Heart left ventricle (tissue), 16 donors: ENCODE measurements at regions of chr3 and their contacts with region 1.

Region 1: DNA sequence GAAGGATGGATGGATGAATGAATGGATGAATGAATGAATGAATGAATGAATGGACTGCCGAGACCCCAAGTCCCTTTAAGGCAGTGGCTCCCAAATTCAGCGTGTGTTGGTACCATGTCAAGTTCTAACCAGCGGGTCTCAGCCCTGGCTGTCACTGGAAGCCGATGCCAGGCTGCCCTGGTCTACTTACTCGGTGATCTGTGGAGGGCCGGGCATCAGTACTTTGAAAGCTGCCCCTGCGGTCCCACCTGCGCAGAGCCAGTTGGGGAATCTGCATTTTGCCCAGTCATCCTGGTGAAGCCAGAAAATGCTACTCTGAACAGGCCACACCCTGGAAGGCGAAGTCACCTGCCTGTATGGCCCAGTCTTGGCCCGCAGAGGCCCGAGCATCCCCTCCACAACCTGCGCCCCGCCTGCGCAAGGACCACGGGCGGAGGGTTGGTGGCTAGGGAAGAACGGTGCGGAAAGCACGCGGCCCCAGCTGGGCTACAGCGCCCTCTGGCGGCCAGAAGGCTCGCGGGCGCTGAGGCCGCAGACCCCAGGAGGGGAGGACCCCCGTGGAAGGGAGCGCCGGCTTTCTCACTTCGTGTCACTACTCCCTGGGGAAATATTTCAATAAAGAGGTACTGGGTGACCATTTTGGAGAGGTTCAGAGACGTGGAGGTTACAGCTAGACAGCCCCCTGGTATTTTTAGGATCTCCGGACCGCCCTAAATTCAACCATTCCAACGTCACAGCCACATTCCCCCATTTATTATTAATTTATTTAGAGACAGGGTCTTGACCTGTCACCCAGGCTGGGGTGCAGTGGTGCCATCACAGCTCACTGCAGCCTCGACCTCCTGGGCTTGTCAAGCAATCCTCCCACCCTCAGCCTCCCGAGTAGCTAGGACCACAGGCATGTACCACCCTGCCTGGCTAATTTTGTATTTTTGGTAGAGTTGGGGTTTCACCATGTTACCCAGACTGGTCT is 34.9 kb downstream of the PRKCD start:
- DNase-seq: peak; percentile 46 to 76 (median 53)
- ATAC-seq: peak in 3 of 4 donors; percentile 61 to 76 (median 74)
- H3K4me3 ChIP-seq: no peak overlapping the region
- H3K27ac ChIP-seq: no peak overlapping the region
- H3K4me1 ChIP-seq: peaks cover 0 to 49% (median 22%) of the 10 kb centered on the region in 12 donors
- H3K27me3 ChIP-seq: no peaks in the 10 kb centered on the region
- CTCF ChIP-seq: peak; percentile 95 to 100 (median 99)
- POLR2A ChIP-seq: no peak

Region 2: GRCh38 chr3:53102601-53103147 is 93.2 kb before region 1 on chr3:
- intact Hi-C with region 1: no loop called
- DNase-seq: no peak
- ATAC-seq: peak in 2 of 4 donors; percentile 21 to 56
- H3K4me3 ChIP-seq: no peak overlapping the region
- H3K27ac ChIP-seq: peak overlapping the region in 1 of 12 donors; percentile 56
- H3K4me1 ChIP-seq: peaks cover 0 to 22% (median 0%) of the 10 kb centered on the region in 12 donors
- H3K27me3 ChIP-seq: no peaks in the 10 kb centered on the region
- CTCF ChIP-seq: no peak
- POLR2A ChIP-seq: no peak

Region 3: DNA sequence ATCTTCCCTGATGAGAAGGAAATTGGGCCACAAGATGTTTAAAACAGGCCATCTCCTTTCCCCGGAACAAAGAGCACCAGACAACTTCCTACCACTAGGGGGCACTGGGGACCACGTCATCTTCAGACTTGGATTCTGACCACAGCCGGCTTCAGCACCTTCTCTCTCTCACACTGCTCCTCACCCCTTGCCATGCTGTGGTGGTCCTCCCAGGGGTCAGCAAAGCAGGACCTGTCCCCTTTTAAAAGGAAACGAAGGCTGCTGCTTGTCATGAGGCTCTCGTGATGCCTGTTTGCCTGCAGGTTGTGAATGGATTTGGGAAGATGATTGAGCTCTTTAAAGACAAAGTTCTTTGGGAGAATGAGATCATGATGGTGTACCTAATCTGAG is 81.9 kb before region 1 on chr3:
- intact Hi-C with region 1: loop called (anchors 1 to 2 kb)
- DNase-seq: peak; percentile 78 to 85 (median 83)
- ATAC-seq: peak; percentile 76 to 89 (median 84)
- H3K4me3 ChIP-seq: no peak overlapping the region
- H3K27ac ChIP-seq: peak overlapping the region in 11 of 12 donors; percentile 63 to 88 (median 80)
- H3K4me1 ChIP-seq: peaks cover 0 to 25% (median 11%) of the 10 kb centered on the region in 12 donors
- H3K27me3 ChIP-seq: no peaks in the 10 kb centered on the region
- CTCF ChIP-seq: peak; percentile 84 to 96 (median 90)
- POLR2A ChIP-seq: no peak